Caco-2 (cell line): ENCODE measurements at regions of chr6 and their contacts with region 1.

Region 1: GRCh38 chr6:52566853-52567279 is 10.0 kb downstream of the TRAM2 start:
- DNase-seq: peak; percentile 88 to 93
- H3K4me3 ChIP-seq: no peak overlapping the region
- H3K4me3 Mint-ChIP-seq: peak overlapping the region; percentile 21
- H3K27ac Mint-ChIP-seq: peak overlapping the region; percentile 75
- H3K4me1 ChIP-seq: peaks cover 84% of the 10 kb centered on the region
- H3K4me1 Mint-ChIP-seq: peaks cover 54% of the 10 kb centered on the region
- H3K27me3 ChIP-seq: no peaks in the 10 kb centered on the region
- H3K27me3 Mint-ChIP-seq: no peaks in the 10 kb centered on the region
- CTCF ChIP-seq: no peak

Region 2: GRCh38 chr6:52389626-52390360 is 177.1 kb before region 1 on chr6:
- CTCF ChIA-PET with region 1: no interaction called
- POLR2A ChIA-PET with region 1: no interaction called
- intact Hi-C with region 1: no loop called
- DNase-seq: no peak
- H3K4me3 ChIP-seq: no peak overlapping the region
- H3K4me3 Mint-ChIP-seq: peak overlapping the region; percentile 13
- H3K27ac Mint-ChIP-seq: peak overlapping the region; percentile 41
- H3K4me1 ChIP-seq: peaks cover 9% of the 10 kb centered on the region; the same call in 1 of the 2 replicates
- H3K4me1 Mint-ChIP-seq: peaks cover 12% of the 10 kb centered on the region
- H3K27me3 ChIP-seq: no peaks in the 10 kb centered on the region
- H3K27me3 Mint-ChIP-seq: no peaks in the 10 kb centered on the region
- CTCF ChIP-seq: no peak

Region 3: GRCh38 chr6:52497652-52498408 is 69.0 kb before region 1 on chr6:
- CTCF ChIA-PET with region 1: no interaction called
- POLR2A ChIA-PET with region 1: no interaction called
- intact Hi-C with region 1: loop called (anchors 2 kb)
- DNase-seq: no peak
- H3K4me3 ChIP-seq: no peak overlapping the region
- H3K4me3 Mint-ChIP-seq: no peak overlapping the region
- H3K27ac Mint-ChIP-seq: no peak overlapping the region
- H3K4me1 ChIP-seq: no peaks in the 10 kb centered on the region
- H3K4me1 Mint-ChIP-seq: no peaks in the 10 kb centered on the region
- H3K27me3 ChIP-seq: no peaks in the 10 kb centered on the region
- H3K27me3 Mint-ChIP-seq: no peaks in the 10 kb centered on the region
- CTCF ChIP-seq: no peak

Region 4: DNA sequence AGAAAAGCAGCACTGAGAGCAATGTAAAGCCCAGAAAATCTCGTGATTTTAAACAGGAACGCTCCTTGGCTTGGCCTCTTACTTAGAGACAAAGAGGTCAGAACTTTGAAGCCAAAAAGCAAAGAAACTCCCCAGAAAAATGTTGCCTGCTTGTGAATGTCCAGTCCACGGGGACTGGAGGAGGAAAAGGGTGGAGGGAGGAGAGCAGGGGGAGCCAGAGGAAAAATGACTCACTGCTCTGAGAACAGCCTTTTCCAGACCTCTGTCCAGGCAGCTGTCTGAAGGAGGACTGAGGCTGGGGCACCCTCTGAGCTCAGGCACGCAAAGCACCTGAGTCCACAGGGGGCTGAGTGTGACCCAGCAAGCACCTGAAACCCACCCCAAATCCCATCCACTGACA is 54.7 kb before region 1 on chr6:
- CTCF ChIA-PET with region 1: no interaction called
- POLR2A ChIA-PET with region 1: no interaction called
- intact Hi-C with region 1: loop called (anchors 5 kb)
- DNase-seq: no peak
- H3K4me3 ChIP-seq: no peak overlapping the region
- H3K4me3 Mint-ChIP-seq: no peak overlapping the region
- H3K27ac Mint-ChIP-seq: no peak overlapping the region
- H3K4me1 ChIP-seq: peaks cover 31% of the 10 kb centered on the region; the same call in 1 of the 2 replicates
- H3K4me1 Mint-ChIP-seq: peaks cover 25% of the 10 kb centered on the region
- H3K27me3 ChIP-seq: no peaks in the 10 kb centered on the region
- H3K27me3 Mint-ChIP-seq: no peaks in the 10 kb centered on the region
- CTCF ChIP-seq: no peak

Region 5: GRCh38 chr6:52577022-52577777 is 10.3 kb after region 1 on chr6 and contains the start of gene TRAM2:
- CTCF ChIA-PET with region 1: interaction called, 5 read pairs
- POLR2A ChIA-PET with region 1: interaction called, 10 read pairs
- intact Hi-C with region 1: loop called (anchors 1 kb)
- DNase-seq: peak; percentile 87 to 93
- H3K4me3 ChIP-seq: peak within 1 kb of the TSS; percentile 80
- H3K4me3 Mint-ChIP-seq: peak within 1 kb of the TSS; percentile 81
- H3K27ac Mint-ChIP-seq: peak within 1 kb of the TSS; percentile 81
- H3K4me1 ChIP-seq: peaks cover 60% of the 10 kb centered on the region
- H3K4me1 Mint-ChIP-seq: peaks cover 48% of the 10 kb centered on the region
- H3K27me3 ChIP-seq: no peaks in the 10 kb centered on the region
- H3K27me3 Mint-ChIP-seq: no peaks in the 10 kb centered on the region
- CTCF ChIP-seq: no peak
- total RNA-seq, gene TRAM2: 63.8 and 71.6 TPM in 2 replicates

Region 6: DNA sequence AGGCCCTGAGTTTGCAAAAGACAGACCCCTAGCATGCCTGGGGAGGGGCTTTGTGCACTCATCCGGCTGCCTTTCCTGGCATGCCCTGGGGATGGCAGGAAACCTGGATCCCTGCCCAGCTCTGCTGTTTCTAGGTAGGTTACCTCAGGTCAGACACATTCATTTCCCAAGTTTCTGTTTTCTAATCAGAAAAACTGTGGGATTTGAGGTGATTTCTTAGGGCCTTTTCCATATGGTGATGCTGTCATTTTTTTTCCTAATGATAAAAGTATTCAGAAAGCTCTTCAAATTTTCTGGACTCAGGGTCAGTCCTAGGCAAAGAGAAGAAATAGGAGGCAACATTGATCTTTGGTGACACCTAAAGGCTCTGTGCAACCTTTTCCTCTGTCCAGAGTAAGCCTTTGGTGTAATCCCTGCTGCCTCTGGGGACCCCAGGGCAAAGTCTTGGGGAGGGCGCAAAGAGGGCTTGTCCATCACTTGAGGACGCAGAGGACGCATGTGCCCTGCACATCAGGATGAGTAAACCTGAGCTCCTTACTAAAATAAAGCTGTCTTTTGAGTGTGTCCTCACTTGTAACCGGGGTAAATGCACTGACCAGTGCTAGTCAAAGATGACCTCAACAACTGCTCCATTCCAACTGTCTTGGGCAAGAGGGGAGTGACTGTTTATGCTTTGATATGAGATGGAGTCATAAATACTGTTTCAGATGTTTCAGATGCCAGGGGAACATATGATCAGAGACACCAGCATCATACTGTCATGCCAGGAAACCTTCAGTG is 23.5 kb after region 1 on chr6:
- CTCF ChIA-PET with region 1: interaction called, 12 read pairs
- POLR2A ChIA-PET with region 1: no interaction called
- intact Hi-C with region 1: loop called (anchors 1 kb)
- DNase-seq: peak in 1 of 2 experiments; percentile 58
- H3K4me3 ChIP-seq: no peak overlapping the region
- H3K4me3 Mint-ChIP-seq: no peak overlapping the region
- H3K27ac Mint-ChIP-seq: peak overlapping the region; percentile 10
- H3K4me1 ChIP-seq: peaks cover 41% of the 10 kb centered on the region
- H3K4me1 Mint-ChIP-seq: peaks cover 40% of the 10 kb centered on the region
- H3K27me3 ChIP-seq: no peaks in the 10 kb centered on the region
- H3K27me3 Mint-ChIP-seq: no peaks in the 10 kb centered on the region
- CTCF ChIP-seq: peak; percentile 31 to 54